A549 (cell line): ENCODE measurements at regions of chr18 and their contacts with region 1.

Region 1: GRCh38 chr18:7926526-7926925 is 359.4 kb downstream of the PTPRM start:
- DNase-seq: peak; percentile 44 to 81
- ATAC-seq: peak; percentile 70 to 73; a peak in 5 of 6 replicates
- H3K4me3 ChIP-seq: no peak overlapping the region
- H3K27ac ChIP-seq: peak overlapping the region; percentile 88 to 97
- H3K4me1 ChIP-seq: peaks cover 82% of the 10 kb centered on the region
- CTCF ChIP-seq: peak; percentile 51
- EP300 ChIP-seq: no peak
- POLR2A ChIP-seq: no peak
- RAD21 ChIP-seq: peak; percentile 54 to 58

Region 2: DNA sequence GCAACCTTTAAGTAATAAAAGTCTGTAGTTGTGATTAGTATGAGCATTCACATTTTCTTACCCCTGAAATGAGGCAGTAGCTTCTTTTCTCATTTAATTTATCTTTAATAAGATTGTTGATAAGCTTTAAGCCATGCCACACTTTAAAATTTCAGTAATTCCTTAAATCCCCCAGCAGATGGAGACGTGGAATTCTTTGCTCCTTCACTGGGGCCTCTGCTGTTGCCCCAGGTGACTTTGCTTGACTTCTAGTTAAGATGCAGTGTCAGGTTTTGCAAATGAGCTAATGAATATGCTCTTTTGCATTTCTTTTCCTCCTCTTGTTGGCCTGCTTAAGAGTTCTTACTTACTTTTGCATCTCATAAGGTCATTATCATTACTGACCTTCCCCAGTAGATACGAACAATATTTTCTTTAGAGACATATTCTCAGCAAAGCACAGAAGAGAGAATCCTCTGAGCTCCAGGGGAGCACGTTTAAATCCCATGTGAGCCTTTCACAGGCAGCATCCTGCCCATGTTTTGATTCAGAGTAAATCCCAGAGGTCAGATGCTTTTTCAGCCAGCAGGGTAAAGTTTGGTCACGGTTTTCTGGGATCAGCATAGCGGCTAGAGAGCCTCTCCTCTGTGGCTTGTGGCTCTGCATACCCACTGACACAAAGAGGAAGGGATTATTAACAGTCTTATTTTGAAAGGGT is 136.5 kb before region 1 on chr18:
- CTCF ChIA-PET with region 1: interaction called, 11 read pairs
- POLR2A ChIA-PET with region 1: no interaction called
- DNase-seq: peak; percentile 33 to 63
- ATAC-seq: peak; percentile 54 to 87; a peak in 3 of 6 replicates
- H3K4me3 ChIP-seq: no peak overlapping the region
- H3K27ac ChIP-seq: peak overlapping the region; percentile 50 to 77
- H3K4me1 ChIP-seq: peaks cover 57% of the 10 kb centered on the region
- CTCF ChIP-seq: peak; percentile 56
- EP300 ChIP-seq: no peak
- POLR2A ChIP-seq: no peak
- RAD21 ChIP-seq: peak; percentile 67 to 72

Region 3: GRCh38 chr18:7974200-7974874 is 47.8 kb after region 1 on chr18:
- CTCF ChIA-PET with region 1: no interaction called
- POLR2A ChIA-PET with region 1: no interaction called
- DNase-seq: no peak
- ATAC-seq: no peak
- H3K4me3 ChIP-seq: no peak overlapping the region
- H3K27ac ChIP-seq: no peak overlapping the region
- H3K4me1 ChIP-seq: peaks cover 3% of the 10 kb centered on the region; the same call in 1 of the 3 replicates
- CTCF ChIP-seq: no peak
- EP300 ChIP-seq: no peak
- POLR2A ChIP-seq: no peak
- RAD21 ChIP-seq: no peak